ENCODE measurements at regions of chr19 and their contacts with region 1.

Region 1: DNA sequence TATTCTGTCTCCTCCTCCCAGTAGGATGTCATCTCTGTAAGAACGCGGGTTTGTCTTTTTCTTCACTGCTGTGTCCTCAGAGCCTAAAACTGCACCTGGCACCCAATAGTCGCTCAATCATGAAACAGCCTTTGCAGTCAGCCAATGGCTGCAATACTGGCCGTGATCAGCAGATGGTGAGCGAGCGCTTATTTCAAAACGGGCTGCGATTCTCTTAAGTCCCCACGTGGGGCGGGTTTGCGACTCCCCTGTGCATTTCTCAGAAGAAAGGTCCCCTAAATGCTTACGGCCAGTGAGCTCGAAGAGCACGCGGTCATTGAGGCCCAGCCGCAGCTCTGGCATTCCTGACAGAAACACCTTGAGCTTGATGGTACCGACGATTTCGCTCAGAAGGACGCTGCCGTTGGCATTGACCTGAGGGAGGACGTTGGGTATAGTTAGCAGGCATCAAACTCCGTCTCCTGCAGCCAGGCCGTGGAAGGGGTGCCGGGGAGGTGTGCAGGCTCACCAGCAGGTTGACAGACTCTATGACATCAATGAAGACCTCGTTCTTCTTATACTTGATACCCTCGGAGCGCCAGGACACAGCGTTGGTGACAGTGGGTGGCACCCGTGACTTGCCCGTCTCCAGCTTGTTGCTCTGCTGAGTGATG is 6.0 kb downstream of the AP1M2 start:
- DNase-seq: peak; percentile 90
- ATAC-seq: peak; percentile 94

Region 2: GRCh38 chr19:10644260-10645007 is 63.3 kb after region 1 on chr19:
- intact Hi-C with region 1: loop called (anchors 2 kb)
- DNase-seq: peak; percentile 92
- ATAC-seq: peak; percentile 89

Measured in left ventricle myocardium superior (tissue), 1 donor.